ENCODE measurements at regions of chr5 and their contacts with region 1.

Region 1: DNA sequence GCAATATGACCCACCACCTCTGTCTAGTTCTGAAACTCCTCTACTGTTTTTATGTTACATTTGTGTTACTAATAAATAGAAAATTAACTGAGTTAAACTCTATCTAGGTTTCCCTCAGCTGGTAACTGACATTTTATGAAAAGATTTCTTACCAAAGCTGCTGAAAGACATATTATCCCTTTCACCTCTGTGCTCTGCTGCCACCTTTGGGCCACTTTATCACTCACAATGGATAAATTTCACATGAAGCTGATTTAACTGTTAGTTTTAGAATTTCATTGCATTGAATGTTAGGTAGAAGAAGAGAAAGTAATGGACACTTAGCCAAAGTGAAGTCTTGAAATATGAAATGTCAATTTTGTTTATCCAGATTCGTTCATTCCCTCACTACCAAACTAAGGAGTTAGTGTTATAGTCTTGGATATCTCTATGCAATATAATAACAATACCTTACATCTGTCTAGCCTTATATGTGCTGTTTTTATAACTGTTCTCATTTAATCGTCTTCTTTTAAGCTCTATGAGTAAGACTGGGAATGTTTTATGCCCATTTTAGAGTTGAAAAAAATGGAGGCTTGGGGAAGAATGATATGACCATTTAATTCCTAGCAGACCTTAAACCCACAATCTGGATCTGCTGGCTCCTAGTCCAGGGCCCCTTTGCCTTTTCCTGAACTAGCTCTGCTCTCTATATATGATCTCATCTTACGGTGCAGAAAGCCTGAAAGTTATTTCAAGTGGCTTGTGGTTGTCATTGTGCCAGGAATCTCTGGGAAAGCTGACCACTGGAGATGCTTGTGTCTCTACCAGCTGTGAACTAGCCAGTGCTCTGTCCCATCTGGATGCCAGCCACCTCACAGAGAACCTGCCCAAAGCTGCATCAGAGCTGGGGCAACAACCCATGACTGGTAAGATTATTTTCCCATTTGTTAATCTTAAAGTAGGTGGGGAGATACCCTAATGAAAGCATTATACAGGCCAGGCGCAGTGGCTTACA is 97.1 kb downstream of the GOLPH3 start:
- DNase-seq: peak; percentile 80
- ATAC-seq: peak; percentile 50
- H3K4me3 ChIP-seq: no peak overlapping the region
- H3K27ac ChIP-seq: no peak overlapping the region
- H3K4me1 ChIP-seq: peaks cover 2% of the 10 kb centered on the region
- H3K27me3 ChIP-seq: no peaks in the 10 kb centered on the region
- CTCF ChIP-seq: peak; percentile 97

Region 2: DNA sequence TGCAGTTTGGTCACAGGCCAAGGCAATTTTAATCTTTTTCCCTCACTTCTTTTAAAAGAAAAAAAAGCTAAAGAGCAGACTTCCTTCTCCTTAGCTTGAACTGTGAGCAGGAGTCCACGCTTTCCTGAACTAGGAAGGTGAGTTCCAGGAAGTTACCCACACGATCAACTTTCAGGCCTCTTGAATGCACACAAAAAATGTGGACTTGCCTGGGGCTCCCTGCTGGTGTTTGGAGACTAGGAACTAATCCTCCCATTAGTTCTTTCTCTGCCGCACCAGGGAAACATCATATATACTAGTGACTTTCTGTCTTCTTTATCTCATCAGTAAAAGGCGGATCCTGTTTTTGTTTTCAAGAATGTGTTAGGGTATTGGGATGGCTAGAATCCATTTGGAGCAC is 142.8 kb before region 1 on chr5:
- CTCF ChIA-PET with region 1: interaction called, 6 read pairs
- POLR2A ChIA-PET with region 1: no interaction called
- intact Hi-C with region 1: loop called (anchors 1 kb)
- DNase-seq: peak; percentile 6
- ATAC-seq: no peak
- H3K4me3 ChIP-seq: no peak overlapping the region
- H3K27ac ChIP-seq: no peak overlapping the region
- H3K4me1 ChIP-seq: no peaks in the 10 kb centered on the region
- H3K27me3 ChIP-seq: no peaks in the 10 kb centered on the region
- CTCF ChIP-seq: no peak

Region 3: DNA sequence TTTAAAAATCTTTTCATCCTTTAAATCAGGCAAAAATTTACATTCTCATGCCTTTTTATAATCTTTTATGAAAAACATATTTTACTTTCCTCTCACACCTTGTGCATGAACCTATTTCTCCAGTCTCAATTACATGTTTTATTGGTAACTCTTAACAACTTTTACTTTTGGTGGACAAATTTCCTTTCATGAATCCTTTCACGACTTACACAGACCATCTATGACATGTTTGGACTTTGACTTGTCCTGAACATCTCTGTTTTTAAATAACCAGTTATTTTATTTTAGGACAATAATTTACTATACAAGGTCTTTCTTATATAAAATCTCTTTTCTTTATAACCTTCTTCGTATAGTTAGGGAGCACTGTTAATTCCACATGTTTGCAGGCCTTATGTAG is 262.2 kb after region 1 on chr5:
- CTCF ChIA-PET with region 1: no interaction called
- POLR2A ChIA-PET with region 1: no interaction called
- intact Hi-C with region 1: no loop called
- DNase-seq: peak; percentile 55
- ATAC-seq: no peak
- H3K4me3 ChIP-seq: no peak overlapping the region
- H3K27ac ChIP-seq: no peak overlapping the region
- H3K4me1 ChIP-seq: no peaks in the 10 kb centered on the region
- H3K27me3 ChIP-seq: no peaks in the 10 kb centered on the region
- CTCF ChIP-seq: no peak